ENCODE measurements at regions of chr3 and their contacts with region 1.

Region 1: GRCh38 chr3:52934630-52935530 is 37.5 kb upstream of the STIMATE start:
- DNase-seq: peak; percentile 77
- H3K4me3 ChIP-seq: no peak overlapping the region; a peak in 1 of 4 replicates
- H3K27ac ChIP-seq: peak overlapping the region in 1 of 2 experiments; percentile 11; a peak in 1 of 4 replicates
- H3K4me1 ChIP-seq: peaks cover 0 to 2% of the 10 kb centered on the region in 2 experiments; a peak in 2 of 4 replicates
- H3K27me3 ChIP-seq: no peaks in the 10 kb centered on the region
- CTCF ChIP-seq: peak; percentile 80
- EP300 ChIP-seq: no peak
- RAD21 ChIP-seq: peak; percentile 75

Region 2: GRCh38 chr3:52915294-52915693 is 19.6 kb before region 1 on chr3:
- CTCF ChIA-PET with region 1: interaction called, 16 read pairs
- POLR2A ChIA-PET with region 1: no interaction called
- DNase-seq: no peak
- H3K4me3 ChIP-seq: no peak overlapping the region
- H3K27ac ChIP-seq: no peak overlapping the region
- H3K4me1 ChIP-seq: peaks cover 0 to 10% of the 10 kb centered on the region in 2 experiments; a peak in 2 of 4 replicates
- H3K27me3 ChIP-seq: no peaks in the 10 kb centered on the region
- CTCF ChIP-seq: no peak
- EP300 ChIP-seq: no peak
- RAD21 ChIP-seq: no peak

Region 3: GRCh38 chr3:52920841-52921240 is 14.0 kb before region 1 on chr3:
- CTCF ChIA-PET with region 1: interaction called, 16 read pairs
- POLR2A ChIA-PET with region 1: interaction called, 3 read pairs
- DNase-seq: no peak
- H3K4me3 ChIP-seq: no peak overlapping the region
- H3K27ac ChIP-seq: no peak overlapping the region
- H3K4me1 ChIP-seq: peaks cover 0 to 3% of the 10 kb centered on the region in 2 experiments; a peak in 2 of 4 replicates
- H3K27me3 ChIP-seq: no peaks in the 10 kb centered on the region
- CTCF ChIP-seq: no peak
- EP300 ChIP-seq: no peak
- RAD21 ChIP-seq: no peak

Measured in SK-N-SH (cell line).